Calu3 (cell line): ENCODE measurements at regions of chr21 and their contacts with region 1.

Region 1: DNA sequence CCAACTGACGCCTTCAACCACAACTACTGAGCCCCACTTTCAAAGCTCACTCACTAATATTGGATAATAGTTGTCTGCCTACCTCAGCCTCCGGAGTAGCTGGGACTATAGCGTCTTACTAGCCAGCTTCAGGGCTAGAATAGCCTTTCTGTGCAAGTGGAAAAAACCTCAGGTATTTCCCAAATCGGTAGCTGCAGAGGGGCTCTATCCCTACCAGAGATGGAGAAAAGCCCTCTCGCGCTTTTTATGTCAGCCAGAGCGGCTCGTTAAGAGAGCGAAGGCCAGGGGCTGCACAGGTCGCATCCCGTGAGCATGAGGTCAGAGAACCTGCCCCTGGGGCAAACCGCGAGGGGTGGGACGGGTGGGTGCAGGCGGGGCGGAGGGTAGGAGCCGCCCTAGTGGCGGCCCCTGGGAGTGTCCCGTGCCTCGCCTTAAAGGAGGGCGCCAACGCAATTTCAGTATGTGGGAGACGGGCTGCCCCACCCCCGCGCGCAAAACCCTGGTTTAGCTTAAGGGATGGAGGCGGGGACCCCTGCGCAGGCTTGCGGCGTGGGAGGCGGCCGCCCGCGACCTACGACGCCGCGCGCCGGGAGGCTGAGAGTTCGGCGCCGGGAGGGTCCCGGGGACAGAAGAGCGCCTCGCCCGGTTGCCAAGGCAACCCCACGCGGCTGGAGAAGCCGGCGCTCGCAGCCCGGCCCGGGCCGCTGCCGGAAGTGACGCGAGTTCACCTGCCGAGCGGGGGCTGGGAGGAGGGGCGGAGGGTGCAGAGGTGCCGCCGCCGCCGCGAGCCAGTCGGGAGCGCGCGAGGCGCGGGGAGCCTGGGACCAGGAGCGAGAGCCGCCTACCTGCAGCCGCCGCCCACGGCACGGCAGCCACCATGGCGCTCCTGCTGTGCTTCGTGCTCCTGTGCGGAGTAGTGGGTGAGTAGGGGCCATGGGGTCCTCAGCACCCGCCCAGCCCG is at the start of gene CXADR:
- DNase-seq: peak; percentile 93
- H3K4me3 Mint-ChIP-seq: peak within 1 kb of the TSS; percentile 88
- H3K27ac Mint-ChIP-seq: peak within 1 kb of the TSS; percentile 84
- H3K4me1 Mint-ChIP-seq: peaks cover 19% of the 10 kb centered on the region
- H3K27me3 Mint-ChIP-seq: no peaks in the 10 kb centered on the region
- CTCF ChIP-seq: peak; percentile 71
- total RNA-seq, gene CXADR: 51.7 and 55.1 TPM in 2 replicates

Region 2: DNA sequence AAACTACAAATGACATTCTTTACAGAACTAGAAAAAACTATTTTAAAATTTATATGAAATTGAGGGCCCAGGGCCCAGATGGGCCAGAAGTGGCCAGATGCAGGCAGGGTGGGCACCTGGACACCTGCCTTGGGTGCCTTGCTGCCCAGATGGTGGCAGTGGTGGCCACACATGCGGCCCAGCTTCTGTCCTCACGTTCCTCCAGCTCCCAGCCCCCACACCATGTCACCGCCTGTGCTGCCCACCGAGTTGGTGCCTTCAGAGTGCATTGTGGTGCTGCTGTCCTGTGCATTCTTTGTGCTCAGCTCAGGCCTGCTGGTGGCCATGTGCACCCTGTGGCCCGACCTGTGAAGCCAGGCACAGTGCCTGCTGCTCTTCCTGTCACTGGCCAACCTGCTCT is 216.5 kb before region 1 on chr21:
- CTCF ChIA-PET with region 1: no interaction called
- intact Hi-C with region 1: no loop called
- DNase-seq: no peak
- H3K4me3 Mint-ChIP-seq: no peak overlapping the region
- H3K27ac Mint-ChIP-seq: no peak overlapping the region
- H3K4me1 Mint-ChIP-seq: no peaks in the 10 kb centered on the region
- H3K27me3 Mint-ChIP-seq: no peaks in the 10 kb centered on the region
- CTCF ChIP-seq: no peak

Region 3: DNA sequence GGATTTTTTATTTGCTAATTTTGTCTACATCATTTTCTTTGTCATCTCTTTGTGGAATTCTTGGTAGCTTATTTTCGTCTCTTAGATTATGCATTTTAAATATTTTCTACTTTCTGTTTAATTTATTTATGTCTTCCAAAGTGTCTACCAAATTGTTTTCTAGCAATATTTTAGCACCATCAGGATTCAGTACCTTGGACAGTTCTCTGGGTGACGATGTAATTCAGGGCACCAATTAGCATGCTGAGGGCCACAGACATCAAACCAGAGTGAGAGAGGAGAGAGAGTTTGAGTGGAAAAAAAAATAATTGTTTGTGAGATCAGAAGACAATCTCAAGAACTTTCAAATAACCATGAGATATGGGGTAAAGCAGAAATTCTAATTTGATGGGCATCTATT is 169.5 kb before region 1 on chr21:
- CTCF ChIA-PET with region 1: no interaction called
- intact Hi-C with region 1: no loop called
- DNase-seq: peak; percentile 4
- H3K4me3 Mint-ChIP-seq: no peak overlapping the region
- H3K27ac Mint-ChIP-seq: no peak overlapping the region
- H3K4me1 Mint-ChIP-seq: no peaks in the 10 kb centered on the region
- H3K27me3 Mint-ChIP-seq: no peaks in the 10 kb centered on the region
- CTCF ChIP-seq: no peak

Region 4: DNA sequence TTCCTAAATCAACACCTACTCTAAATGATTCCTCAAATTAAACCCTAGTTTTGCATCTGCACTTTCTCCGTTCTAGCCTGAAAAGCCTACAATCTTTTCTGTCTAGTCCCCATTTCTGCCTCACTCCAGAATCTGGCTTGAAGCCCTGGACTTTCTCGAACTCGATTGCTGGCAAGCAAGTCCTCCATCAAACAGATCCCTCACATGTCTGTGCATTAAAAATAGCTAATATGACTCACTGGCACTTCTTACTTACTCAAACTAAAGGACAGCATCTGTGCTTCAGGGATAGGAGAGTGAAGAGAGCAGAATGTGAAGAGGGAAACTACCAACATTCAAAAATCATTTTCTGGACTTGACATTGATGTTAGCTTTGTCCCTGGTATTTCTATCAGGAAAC is 51.5 kb before region 1 on chr21:
- CTCF ChIA-PET with region 1: no interaction called
- intact Hi-C with region 1: loop called (anchors 5 kb)
- DNase-seq: no peak
- H3K4me3 Mint-ChIP-seq: no peak overlapping the region
- H3K27ac Mint-ChIP-seq: no peak overlapping the region
- H3K4me1 Mint-ChIP-seq: peaks cover 19% of the 10 kb centered on the region
- H3K27me3 Mint-ChIP-seq: no peaks in the 10 kb centered on the region
- CTCF ChIP-seq: no peak

Region 5: DNA sequence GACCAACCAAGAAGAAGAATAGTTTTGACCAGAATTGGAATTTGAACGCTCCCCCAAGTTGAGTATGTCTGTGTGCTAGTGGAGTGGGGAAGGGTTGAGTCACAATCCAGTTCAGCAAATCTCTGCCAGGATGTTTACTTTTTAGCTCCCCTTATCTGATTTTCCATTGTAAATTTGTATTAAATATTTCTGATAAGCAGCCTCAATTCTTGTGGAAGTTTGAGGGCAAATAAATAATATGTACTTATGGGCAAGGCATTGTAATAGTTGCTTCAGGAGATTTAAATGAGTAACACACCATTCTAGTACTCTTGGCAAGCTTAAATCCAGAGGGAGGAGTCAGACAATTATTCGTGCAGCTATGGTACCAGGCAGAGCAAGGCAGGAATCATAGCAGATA is 14.7 kb after region 1 on chr21:
- CTCF ChIA-PET with region 1: interaction called, 5 read pairs
- intact Hi-C with region 1: loop called (anchors 2 kb)
- DNase-seq: peak; percentile 30
- H3K4me3 Mint-ChIP-seq: peak overlapping the region; percentile 17
- H3K27ac Mint-ChIP-seq: peak overlapping the region; percentile 87
- H3K4me1 Mint-ChIP-seq: peaks cover 41% of the 10 kb centered on the region
- H3K27me3 Mint-ChIP-seq: no peaks in the 10 kb centered on the region
- CTCF ChIP-seq: no peak